MCF 10A (cell line): ENCODE measurements at regions of chr6 and their contacts with region 1.

Region 1: DNA sequence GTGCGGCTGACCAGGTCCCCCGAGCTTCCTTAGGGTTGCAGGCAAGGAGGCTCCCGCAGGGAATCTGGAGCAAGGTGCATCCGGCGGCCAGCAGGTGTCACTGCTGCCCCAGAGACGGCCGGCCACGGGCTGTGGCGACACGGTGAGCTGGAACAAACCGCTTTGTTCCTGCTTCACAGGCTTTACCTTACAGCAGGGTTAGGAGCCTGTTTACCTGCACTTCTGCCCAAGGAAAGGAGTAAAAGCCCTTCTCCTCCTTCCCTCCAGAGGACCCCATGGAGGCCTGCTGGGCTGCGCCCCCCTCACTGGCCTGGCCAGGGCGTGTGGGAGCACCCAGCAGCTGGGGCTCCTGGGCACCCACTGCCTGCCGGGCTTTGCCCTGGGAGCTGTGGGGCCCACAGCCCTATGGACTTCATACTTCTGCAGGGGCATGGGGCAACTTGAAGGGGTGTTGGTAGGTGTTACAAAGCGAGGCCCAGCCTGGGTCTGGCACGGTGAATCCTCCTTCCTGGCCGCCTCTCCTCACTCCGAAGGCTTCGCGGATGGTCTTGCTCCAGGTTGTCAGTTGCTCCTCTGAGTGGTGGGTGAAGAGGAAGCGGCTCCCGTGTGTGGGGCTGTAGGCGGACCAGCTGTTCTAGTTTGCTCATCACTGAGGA is 88.4 kb downstream of the CDC5L start:
- DNase-seq: peak; percentile 76
- H3K4me3 Mint-ChIP-seq: no peak overlapping the region
- H3K27ac Mint-ChIP-seq: no peak overlapping the region
- H3K4me1 Mint-ChIP-seq: no peaks in the 10 kb centered on the region
- H3K27me3 Mint-ChIP-seq: no peaks in the 10 kb centered on the region
- CTCF ChIP-seq: peak; percentile 95

Region 2: DNA sequence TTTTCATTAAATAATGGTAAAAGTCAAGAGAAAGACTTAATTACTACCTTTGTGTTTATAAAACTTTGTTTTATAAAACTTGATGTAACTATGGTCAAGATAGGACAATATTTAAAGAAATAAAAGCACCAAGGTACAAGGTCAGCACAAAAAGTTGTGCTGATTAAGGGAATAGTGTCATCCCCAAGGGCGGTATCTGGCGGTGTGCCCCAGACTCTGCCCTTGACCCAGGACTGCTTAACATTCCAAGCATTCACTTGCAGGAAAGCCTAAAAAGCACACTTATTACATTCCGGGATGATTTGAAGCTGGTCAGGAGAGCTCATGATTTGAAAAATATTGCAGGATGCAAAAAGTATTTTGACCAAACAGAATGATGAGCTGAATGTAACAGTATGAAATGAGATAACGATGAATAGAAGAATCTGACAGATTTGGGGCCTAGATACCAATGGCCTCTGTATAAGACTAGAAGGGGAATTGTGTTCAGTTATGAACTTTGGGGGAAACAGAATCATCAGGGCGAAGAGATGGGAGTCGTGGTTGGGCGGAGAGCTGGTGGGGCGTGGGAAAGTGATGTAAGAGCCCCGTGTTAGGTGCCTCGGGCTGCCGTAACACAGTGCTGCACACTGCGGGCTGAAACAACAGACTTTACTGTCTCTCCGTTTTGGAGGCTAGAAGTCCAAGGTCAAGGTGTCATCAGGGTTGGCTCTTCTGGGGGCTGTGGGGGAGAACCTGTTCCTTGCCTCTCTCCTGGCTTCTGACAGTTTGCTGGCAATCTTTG is 11.2 kb before region 1 on chr6:
- CTCF ChIA-PET with region 1: interaction called, 19 read pairs
- POLR2A ChIA-PET with region 1: interaction called, 3 read pairs
- intact Hi-C with region 1: no loop called
- DNase-seq: no peak
- H3K4me3 Mint-ChIP-seq: no peak overlapping the region
- H3K27ac Mint-ChIP-seq: no peak overlapping the region
- H3K4me1 Mint-ChIP-seq: peaks cover 6% of the 10 kb centered on the region
- H3K27me3 Mint-ChIP-seq: no peaks in the 10 kb centered on the region
- CTCF ChIP-seq: no peak

Region 3: DNA sequence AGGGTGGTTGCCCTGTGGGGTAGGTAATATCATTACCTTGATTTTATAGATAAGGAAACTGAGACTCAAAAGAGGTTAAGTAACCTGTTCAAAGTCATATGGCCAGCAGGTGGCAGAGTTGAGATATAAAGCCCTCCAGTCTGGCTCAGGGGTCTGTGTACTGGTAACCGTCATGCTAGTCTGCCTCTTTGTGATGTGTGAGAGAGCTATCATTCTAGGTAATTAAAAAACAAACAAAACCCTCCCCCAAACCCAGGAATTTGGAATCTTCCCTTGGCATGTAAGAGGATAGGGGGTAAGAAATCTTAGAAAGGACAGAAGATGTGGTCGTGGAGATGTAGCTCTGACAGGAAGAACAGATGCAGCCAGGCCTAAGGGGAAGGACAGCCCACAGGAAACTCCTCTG is 117.6 kb after region 1 on chr6:
- CTCF ChIA-PET with region 1: interaction called, 3 read pairs
- POLR2A ChIA-PET with region 1: no interaction called
- intact Hi-C with region 1: loop called (anchors 1 kb)
- DNase-seq: peak; percentile 68
- H3K4me3 Mint-ChIP-seq: no peak overlapping the region
- H3K27ac Mint-ChIP-seq: peak overlapping the region; percentile 35
- H3K4me1 Mint-ChIP-seq: no peaks in the 10 kb centered on the region
- H3K27me3 Mint-ChIP-seq: peaks cover 18% of the 10 kb centered on the region
- CTCF ChIP-seq: peak; percentile 55

Region 4: GRCh38 chr6:44645276-44645675 is 169.4 kb after region 1 on chr6:
- CTCF ChIA-PET with region 1: interaction called, 12 read pairs
- POLR2A ChIA-PET with region 1: no interaction called
- intact Hi-C with region 1: no loop called
- DNase-seq: no peak
- H3K4me3 Mint-ChIP-seq: no peak overlapping the region
- H3K27ac Mint-ChIP-seq: no peak overlapping the region
- H3K4me1 Mint-ChIP-seq: peaks cover 16% of the 10 kb centered on the region
- H3K27me3 Mint-ChIP-seq: no peaks in the 10 kb centered on the region
- CTCF ChIP-seq: no peak

Region 5: DNA sequence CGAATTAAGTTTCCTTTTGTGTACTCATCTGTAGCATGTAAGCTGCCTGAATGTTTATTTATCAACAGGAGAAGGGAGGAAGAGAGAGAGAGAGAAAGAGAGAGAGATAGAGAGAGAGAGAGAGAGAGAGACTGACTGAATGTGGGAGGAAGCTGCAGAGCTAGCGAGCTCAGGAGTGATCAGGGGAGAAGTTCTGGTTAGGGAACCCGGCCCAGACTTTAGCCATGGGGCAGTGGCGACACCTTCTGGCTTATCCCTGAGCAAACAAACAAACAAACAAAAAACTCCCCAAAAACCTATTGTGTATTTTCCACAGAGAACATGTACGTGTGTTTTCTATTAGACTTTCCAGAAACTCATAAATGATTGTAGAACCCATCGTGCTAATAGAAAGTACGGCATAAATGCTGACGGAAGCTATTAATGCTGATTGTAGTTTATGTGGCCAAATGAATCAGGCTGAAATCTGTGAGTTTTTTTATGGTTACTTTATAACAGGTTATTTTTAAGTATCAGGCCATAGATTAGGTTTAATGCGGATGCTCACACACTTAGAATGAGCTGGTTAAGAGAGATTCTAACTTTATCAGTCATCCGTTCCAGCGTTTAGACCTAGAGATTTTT is 1446.9 kb after region 1 on chr6:
- CTCF ChIA-PET with region 1: interaction called, 64 read pairs
- POLR2A ChIA-PET with region 1: interaction called, 3 read pairs
- intact Hi-C with region 1: loop called (anchors 2 kb)
- DNase-seq: peak; percentile 73
- H3K4me3 Mint-ChIP-seq: no peak overlapping the region
- H3K27ac Mint-ChIP-seq: peak overlapping the region; percentile 39
- H3K4me1 Mint-ChIP-seq: peaks cover 6% of the 10 kb centered on the region
- H3K27me3 Mint-ChIP-seq: no peaks in the 10 kb centered on the region
- CTCF ChIP-seq: peak; percentile 64